Cardiac septum (tissue), 1 donor: ENCODE measurements at regions of chrX and their contacts with region 1.

Region 1: GRCh38 chrX:69615779-69616456 is at the start of gene EDA:
- DNase-seq: peak; percentile 85
- total RNA-seq, gene EDA: 5.9 TPM

Region 2: GRCh38 chrX:68822641-68823410 is 793.1 kb before region 1 on chrX:
- intact Hi-C with region 1: loop called (anchors 5 kb)
- DNase-seq: peak; percentile 71

Region 3: GRCh38 chrX:69538321-69538876 is 77.5 kb before region 1 on chrX:
- intact Hi-C with region 1: loop called (anchors 2 kb)
- DNase-seq: no peak